Esophagus squamous epithelium (tissue), 5 donors: ENCODE measurements at regions of chr4 and their contacts with region 1.

Region 1: GRCh38 chr4:94406668-94407437 is 44.9 kb upstream of the PDLIM5 start:
- DNase-seq: no peak
- H3K4me3 ChIP-seq: no peak overlapping the region
- H3K27ac ChIP-seq: no peak overlapping the region
- H3K4me1 ChIP-seq: peaks cover 0 to 27% (median under 1%) of the 10 kb centered on the region in 3 donors
- H3K27me3 ChIP-seq: no peaks in the 10 kb centered on the region
- CTCF ChIP-seq: peak; percentile 42 to 85 (median 74)
- POLR2A ChIP-seq: no peak

Region 2: GRCh38 chr4:94304365-94304971 is 102.4 kb before region 1 on chr4:
- intact Hi-C with region 1: no loop called
- DNase-seq: no peak
- H3K4me3 ChIP-seq: no peak overlapping the region
- H3K27ac ChIP-seq: no peak overlapping the region
- H3K4me1 ChIP-seq: no peaks in the 10 kb centered on the region
- H3K27me3 ChIP-seq: no peaks in the 10 kb centered on the region
- CTCF ChIP-seq: peak in 5 of 6 experiments; percentile 33 to 59 (median 43)
- POLR2A ChIP-seq: no peak

Region 3: DNA sequence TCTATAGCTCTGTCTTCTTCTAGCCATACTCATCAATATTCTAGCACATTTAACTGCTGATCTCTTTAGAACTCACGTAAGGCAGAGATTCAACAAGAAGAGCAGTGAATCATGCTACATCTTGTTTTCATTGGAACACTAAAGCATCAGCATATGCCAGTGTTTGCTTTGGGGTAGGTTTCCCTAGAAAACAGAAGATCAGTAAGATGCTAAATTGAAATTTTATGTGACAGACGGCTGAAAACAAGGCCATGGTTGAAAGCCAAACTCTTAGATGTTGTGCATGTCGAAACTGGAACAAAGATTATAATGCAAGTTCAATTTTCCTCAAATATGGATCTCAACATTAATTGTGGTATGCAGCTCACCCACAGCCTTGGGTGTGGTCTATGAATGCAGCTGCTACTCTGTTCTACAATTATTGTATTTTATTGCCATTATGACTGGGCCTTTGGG is 152.5 kb after region 1 on chr4:
- intact Hi-C with region 1: no loop called
- DNase-seq: no peak
- H3K4me3 ChIP-seq: no peak overlapping the region
- H3K27ac ChIP-seq: peak overlapping the region; percentile 22 to 76 (median 50)
- H3K4me1 ChIP-seq: peaks cover 11 to 55% (median 24%) of the 10 kb centered on the region in 3 donors
- H3K27me3 ChIP-seq: no peaks in the 10 kb centered on the region
- CTCF ChIP-seq: no peak
- POLR2A ChIP-seq: no peak

Region 4: DNA sequence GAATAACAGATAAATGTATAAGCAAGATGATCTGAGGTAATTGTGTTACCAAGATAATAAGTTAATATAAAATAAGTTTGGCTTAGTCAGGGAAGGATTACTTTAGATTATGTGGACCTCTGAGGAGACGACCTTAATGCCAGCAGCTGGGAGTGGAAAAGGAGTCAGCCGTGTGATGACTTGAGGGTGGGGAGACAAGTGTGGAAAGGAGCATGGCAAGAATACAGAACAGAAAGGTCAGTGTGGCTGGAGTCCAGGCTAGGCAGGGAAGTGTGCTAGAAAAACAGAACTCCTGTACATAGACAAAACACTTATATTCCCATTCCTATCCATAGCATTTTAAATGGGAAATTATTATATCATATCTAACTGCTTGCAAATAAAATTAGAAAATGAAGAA is 183.6 kb after region 1 on chr4:
- intact Hi-C with region 1: loop called (anchors 5 kb)
- DNase-seq: no peak
- H3K4me3 ChIP-seq: no peak overlapping the region
- H3K27ac ChIP-seq: no peak overlapping the region
- H3K4me1 ChIP-seq: peaks cover 0 to 3% (median 0%) of the 10 kb centered on the region in 3 donors
- H3K27me3 ChIP-seq: no peaks in the 10 kb centered on the region
- CTCF ChIP-seq: no peak
- POLR2A ChIP-seq: no peak